Activated CD4-positive, alpha-beta memory T cell treated with anti-CD3 and anti-CD28 coated beads for 36 hours (primary cell): ENCODE measurements at regions of chr2 and their contacts with region 1.

Region 1: DNA sequence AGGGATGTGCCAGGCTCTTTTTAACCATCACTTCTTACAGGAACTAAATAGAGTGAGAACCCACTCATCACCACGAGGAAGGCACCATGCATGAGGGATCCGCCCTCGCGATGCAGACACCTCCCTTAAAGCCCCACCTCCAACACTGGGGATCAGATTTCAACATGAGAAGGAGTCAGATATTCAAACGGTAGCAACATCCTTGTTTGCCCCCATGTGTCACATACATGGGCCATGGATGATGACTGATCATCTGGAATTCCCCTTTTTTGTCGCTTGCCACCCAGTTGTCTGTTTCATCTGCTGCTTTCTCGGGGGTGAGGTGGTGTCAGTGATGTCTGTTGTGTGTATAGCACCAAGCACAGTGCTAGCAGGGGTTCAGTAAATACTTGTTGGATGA is 57.9 kb downstream of the NCK2 start:
- DNase-seq: peak; percentile 83
- H3K4me3 Mint-ChIP-seq: peak overlapping the region; percentile 27
- H3K27ac Mint-ChIP-seq: peak overlapping the region; percentile 87
- H3K4me1 Mint-ChIP-seq: peaks cover 97% of the 10 kb centered on the region
- H3K27me3 Mint-ChIP-seq: no peaks in the 10 kb centered on the region

Region 2: DNA sequence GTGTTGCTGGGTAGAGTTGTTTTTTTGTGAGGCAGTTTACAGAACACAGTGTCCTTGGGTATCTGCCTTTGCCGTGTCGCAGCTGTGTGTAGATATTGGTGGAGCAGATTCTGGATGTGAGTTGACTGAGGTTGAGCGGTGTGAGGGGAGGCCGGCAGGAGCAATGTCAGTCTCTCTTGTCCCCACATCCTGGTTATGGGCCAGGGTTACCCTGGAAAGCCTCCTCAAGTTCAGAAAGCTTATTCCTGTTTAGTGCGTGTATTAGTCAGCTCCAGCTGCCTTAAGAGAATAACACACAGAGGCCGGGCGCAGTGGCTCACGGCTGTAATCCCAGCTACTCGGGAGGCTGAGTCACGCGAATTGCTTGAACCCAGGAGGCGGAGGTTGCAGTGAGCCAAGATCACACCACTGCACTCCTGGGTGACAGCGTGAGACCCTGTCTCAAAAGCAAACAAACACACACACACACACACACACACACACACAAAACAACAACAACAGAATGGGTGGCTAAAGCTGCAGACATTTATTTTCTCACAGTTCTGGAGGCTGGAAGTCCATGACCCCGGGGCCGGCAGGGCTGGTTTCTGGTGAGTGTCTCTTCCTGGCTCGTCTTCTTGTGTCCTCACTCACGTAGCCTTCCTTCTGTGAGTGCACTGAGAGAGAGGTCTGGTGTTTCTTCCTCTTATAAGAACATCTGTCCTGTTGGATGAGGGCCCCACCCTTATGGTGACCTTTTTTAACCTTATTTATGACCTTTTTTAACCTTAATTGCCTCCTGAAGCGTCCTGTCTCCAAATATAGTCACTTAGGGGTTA is 52.8 kb before region 1 on chr2:
- CTCF ChIA-PET with region 1: interaction called, 9 read pairs
- POLR2A ChIA-PET with region 1: interaction called, 20 read pairs
- intact Hi-C with region 1: loop called (anchors 1 kb)
- DNase-seq: peak; percentile 82
- H3K4me3 Mint-ChIP-seq: peak overlapping the region; percentile 70
- H3K27ac Mint-ChIP-seq: peak overlapping the region; percentile 99
- H3K4me1 Mint-ChIP-seq: peaks cover 80% of the 10 kb centered on the region
- H3K27me3 Mint-ChIP-seq: no peaks in the 10 kb centered on the region

Region 3: DNA sequence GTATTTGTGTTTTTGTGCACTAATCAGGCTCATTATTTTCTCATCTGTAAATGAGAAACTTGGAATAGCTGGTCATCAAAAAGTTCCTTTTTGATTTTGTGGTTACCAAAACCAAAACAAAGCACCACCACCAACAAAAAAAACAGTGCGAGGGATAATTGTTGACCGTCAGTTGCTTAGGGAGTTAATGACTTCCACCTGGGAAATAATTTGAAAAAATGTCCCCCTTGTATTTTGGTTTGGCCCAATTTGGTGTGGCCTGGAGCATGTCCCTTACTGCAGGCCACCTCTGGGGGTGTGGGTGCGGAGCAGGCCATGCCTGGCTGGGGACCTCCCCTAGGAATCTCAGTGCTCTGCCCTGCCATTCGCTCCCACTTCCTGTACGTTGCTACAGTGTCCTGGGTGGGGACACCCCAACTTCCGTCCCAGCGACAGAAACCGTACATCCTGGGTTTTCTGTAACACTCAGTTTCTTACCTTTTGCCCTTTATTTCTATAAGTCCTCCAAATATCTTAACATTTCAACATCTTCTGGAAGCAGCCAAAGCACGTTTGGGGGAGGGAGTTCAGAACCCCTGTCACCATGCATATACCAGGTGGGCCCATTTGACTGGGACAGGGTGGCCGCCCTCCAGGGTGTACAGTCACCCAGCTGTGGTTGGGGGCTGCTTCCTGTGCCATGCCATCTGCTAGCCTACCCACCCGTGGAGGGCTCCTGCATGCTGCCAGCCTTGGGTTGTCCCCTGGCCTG is 26.6 kb before region 1 on chr2:
- CTCF ChIA-PET with region 1: interaction called, 4 read pairs
- POLR2A ChIA-PET with region 1: interaction called, 3 read pairs
- intact Hi-C with region 1: loop called (anchors 2 kb)
- DNase-seq: peak; percentile 56
- H3K4me3 Mint-ChIP-seq: peak overlapping the region; percentile 24
- H3K27ac Mint-ChIP-seq: peak overlapping the region; percentile 77
- H3K4me1 Mint-ChIP-seq: peaks cover 90% of the 10 kb centered on the region
- H3K27me3 Mint-ChIP-seq: no peaks in the 10 kb centered on the region

Region 4: DNA sequence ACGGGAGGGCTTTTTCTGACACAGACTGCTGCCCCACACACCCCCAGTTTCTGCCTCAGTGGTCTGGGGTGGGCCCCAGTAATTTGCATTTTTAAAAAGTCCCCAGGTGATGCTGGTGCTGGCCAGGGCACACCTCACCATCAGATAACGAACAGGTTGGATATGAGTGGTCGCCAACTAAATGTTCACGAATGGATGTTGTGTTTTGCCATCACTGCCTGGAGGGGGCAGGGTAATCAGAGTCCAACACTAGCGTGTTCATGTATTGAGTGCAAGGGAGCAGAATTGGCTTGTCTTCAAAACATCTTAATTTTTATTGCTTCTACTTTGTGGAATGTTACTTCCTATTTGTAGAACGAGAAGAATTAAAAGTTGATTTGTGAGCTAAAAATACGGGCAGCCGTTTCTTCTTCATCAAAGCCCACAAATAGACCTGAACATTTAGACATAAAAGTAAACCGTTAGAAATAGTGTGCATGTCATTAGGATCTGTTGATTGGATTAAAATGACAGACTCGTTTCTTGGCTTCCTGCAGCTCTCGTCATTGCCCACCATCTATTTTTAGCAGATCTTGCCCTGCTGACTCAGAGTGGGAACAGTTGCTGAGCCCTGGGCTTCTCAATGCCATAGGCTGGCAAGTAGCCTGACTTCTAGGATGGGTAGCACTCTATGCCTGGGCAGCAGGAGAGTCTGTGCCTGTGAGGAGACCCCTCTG is 12.7 kb before region 1 on chr2:
- CTCF ChIA-PET with region 1: interaction called, 5 read pairs
- POLR2A ChIA-PET with region 1: no interaction called
- intact Hi-C with region 1: loop called (anchors 1 kb)
- DNase-seq: peak; percentile 87
- H3K4me3 Mint-ChIP-seq: peak overlapping the region; percentile 59
- H3K27ac Mint-ChIP-seq: peak overlapping the region; percentile 96
- H3K4me1 Mint-ChIP-seq: peaks cover 95% of the 10 kb centered on the region
- H3K27me3 Mint-ChIP-seq: no peaks in the 10 kb centered on the region

Region 5: GRCh38 chr2:105827351-105828096 is 24.9 kb after region 1 on chr2:
- CTCF ChIA-PET with region 1: no interaction called
- POLR2A ChIA-PET with region 1: interaction called, 4 read pairs
- intact Hi-C with region 1: loop called (anchors 1 kb)
- DNase-seq: no peak
- H3K4me3 Mint-ChIP-seq: no peak overlapping the region
- H3K27ac Mint-ChIP-seq: peak overlapping the region; percentile 70
- H3K4me1 Mint-ChIP-seq: peaks cover 94% of the 10 kb centered on the region
- H3K27me3 Mint-ChIP-seq: no peaks in the 10 kb centered on the region

Region 6: GRCh38 chr2:105836840-105837692 is 34.5 kb after region 1 on chr2:
- CTCF ChIA-PET with region 1: interaction called, 4 read pairs
- POLR2A ChIA-PET with region 1: interaction called, 4 read pairs
- intact Hi-C with region 1: loop called (anchors 2 kb)
- DNase-seq: peak; percentile 74
- H3K4me3 Mint-ChIP-seq: peak overlapping the region; percentile 37
- H3K27ac Mint-ChIP-seq: peak overlapping the region; percentile 81
- H3K4me1 Mint-ChIP-seq: peaks cover 83% of the 10 kb centered on the region
- H3K27me3 Mint-ChIP-seq: no peaks in the 10 kb centered on the region